Activated B cell treated with CpG ODN at 0.5 μM for 24 hours (primary cell): ENCODE measurements at regions of chr4 and their contacts with region 1.

Region 1: GRCh38 chr4:185395956-185396723 is 416 bp upstream of the LRP2BP start:
- DNase-seq: peak; percentile 98
- ATAC-seq: peak; percentile 89
- H3K4me3 Mint-ChIP-seq: peak overlapping the region; percentile 94
- H3K27ac Mint-ChIP-seq: peak overlapping the region; percentile 94
- H3K4me1 Mint-ChIP-seq: peaks cover 63% of the 10 kb centered on the region
- H3K27me3 Mint-ChIP-seq: no peaks in the 10 kb centered on the region
- CTCF ChIP-seq: no peak

Region 2: GRCh38 chr4:184733654-184734524 is 662.3 kb before region 1 on chr4 and contains the start of gene CENPU:
- CTCF ChIA-PET with region 1: no interaction called
- POLR2A ChIA-PET with region 1: no interaction called
- intact Hi-C with region 1: loop called (anchors 5 kb)
- DNase-seq: peak; percentile 95
- ATAC-seq: peak; percentile 96
- H3K4me3 Mint-ChIP-seq: peak within 1 kb of the TSS; percentile 88
- H3K27ac Mint-ChIP-seq: peak within 1 kb of the TSS; percentile 85
- H3K4me1 Mint-ChIP-seq: peaks cover 19% of the 10 kb centered on the region
- H3K27me3 Mint-ChIP-seq: no peaks in the 10 kb centered on the region
- CTCF ChIP-seq: no peak
- total RNA-seq, gene CENPU: 7.0 and 7.1 TPM in 2 replicates

Region 3: DNA sequence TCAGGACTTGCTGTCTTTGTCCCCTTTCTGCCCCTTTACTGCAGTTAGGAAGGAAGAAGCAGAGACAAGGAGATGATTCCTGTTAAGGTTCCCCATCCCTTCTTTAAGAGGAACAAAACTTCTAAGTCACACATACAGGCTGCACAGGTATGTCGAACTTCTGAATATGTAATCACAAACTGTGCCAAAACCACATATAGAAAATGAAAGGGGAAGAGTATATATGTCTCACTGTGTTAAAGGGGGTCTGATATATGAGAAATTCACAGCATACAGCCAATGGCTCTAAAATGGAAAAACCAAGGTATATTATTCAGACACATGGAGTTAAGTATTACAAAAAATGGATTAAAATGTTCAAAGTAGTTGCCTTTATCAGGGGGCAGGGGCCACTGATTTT is 204.1 kb before region 1 on chr4:
- CTCF ChIA-PET with region 1: no interaction called
- POLR2A ChIA-PET with region 1: no interaction called
- intact Hi-C with region 1: no loop called
- DNase-seq: no peak
- ATAC-seq: peak; percentile 61
- H3K4me3 Mint-ChIP-seq: peak overlapping the region; percentile 3
- H3K27ac Mint-ChIP-seq: peak overlapping the region; percentile 13
- H3K4me1 Mint-ChIP-seq: peaks cover 35% of the 10 kb centered on the region
- H3K27me3 Mint-ChIP-seq: no peaks in the 10 kb centered on the region
- CTCF ChIP-seq: no peak

Region 4: DNA sequence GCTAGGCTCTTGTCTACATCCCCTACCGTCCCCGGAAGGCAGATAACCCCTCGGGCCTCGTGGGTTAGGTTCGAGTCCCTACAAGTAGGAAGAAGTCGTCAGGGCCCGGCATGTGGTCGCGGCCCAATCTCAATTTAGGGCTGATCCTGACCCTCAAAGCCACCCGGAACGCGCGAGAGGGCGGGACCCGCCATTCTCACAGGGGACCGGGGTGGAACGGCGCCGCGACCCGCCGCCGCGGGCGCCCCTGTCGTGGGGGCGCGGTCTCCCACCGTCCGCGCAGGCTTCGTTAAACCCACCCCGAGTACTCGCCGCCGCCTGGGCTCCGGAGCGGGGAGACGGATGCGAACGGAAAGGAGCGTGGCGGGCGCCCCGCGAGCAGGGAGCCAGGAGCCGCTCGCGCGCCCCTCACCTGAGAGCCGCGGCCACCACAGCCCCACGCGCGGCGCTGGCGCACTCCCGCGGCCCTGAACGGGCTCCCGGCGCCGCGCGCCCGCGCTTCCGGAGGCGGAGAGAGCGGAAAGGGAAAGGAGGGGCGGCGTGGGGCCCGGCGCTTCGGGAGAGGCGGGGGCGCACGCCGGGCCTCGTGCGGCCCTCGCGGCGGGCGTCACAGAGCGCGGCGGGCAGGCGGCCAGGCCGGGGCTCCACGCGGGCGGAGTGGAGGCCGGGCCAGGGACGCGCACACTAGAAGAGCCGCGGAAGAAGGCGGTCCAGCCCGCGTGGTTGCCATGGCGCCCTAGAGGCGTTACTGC is 192.5 kb before region 1 on chr4 and contains the start of gene CFAP97:
- CTCF ChIA-PET with region 1: no interaction called
- POLR2A ChIA-PET with region 1: interaction called, 12 read pairs
- intact Hi-C with region 1: loop called (anchors 1 kb)
- DNase-seq: peak; percentile 82
- ATAC-seq: peak; percentile 81
- H3K4me3 Mint-ChIP-seq: peak within 1 kb of the TSS; percentile 93
- H3K27ac Mint-ChIP-seq: peak within 1 kb of the TSS; percentile 97
- H3K4me1 Mint-ChIP-seq: peaks cover 47% of the 10 kb centered on the region
- H3K27me3 Mint-ChIP-seq: no peaks in the 10 kb centered on the region
- CTCF ChIP-seq: no peak
- total RNA-seq, gene CFAP97: 42.6 and 44.1 TPM in 2 replicates

Region 5: DNA sequence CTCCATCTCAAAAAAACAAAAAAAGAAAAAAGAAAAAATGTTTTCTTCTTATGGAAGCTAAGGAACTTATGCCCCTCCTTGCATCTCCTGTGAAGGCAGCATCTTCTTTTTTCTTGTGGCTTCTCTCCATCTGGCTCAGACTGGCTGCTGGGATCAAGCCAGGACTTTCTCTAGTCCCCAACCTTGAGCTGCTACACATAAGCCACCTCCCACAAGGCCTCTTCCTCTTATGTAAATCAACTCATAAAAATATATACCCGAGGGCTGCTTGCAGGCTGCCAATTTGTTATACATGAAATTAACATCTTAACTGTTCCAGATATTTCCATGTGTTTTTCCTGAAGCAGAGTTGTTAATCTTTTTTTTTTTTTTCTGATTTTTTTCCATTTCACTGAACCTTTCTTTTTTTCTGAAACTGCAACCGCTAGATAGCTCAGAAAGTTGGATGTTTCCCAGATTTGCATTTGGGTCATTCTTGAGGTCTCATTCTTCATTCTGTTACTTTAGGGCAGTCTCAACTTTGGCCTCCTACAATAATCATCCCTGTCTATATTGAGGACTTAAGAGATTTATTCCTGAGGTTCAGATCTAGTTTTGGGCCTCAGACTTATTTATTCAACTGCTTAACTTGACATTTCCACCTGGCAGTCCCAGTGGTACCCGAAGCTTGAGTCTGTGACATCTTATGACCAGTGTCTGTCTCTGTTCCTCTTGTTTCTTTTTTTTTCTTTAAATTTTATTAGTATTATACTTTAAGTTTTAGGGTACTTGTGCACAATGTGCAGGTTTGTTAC is 176.4 kb before region 1 on chr4:
- CTCF ChIA-PET with region 1: no interaction called
- POLR2A ChIA-PET with region 1: interaction called, 12 read pairs
- intact Hi-C with region 1: no loop called
- DNase-seq: no peak
- ATAC-seq: peak; percentile 82
- H3K4me3 Mint-ChIP-seq: peak overlapping the region; percentile 74
- H3K27ac Mint-ChIP-seq: peak overlapping the region; percentile 87
- H3K4me1 Mint-ChIP-seq: peaks cover 79% of the 10 kb centered on the region
- H3K27me3 Mint-ChIP-seq: no peaks in the 10 kb centered on the region
- CTCF ChIP-seq: no peak

Region 6: DNA sequence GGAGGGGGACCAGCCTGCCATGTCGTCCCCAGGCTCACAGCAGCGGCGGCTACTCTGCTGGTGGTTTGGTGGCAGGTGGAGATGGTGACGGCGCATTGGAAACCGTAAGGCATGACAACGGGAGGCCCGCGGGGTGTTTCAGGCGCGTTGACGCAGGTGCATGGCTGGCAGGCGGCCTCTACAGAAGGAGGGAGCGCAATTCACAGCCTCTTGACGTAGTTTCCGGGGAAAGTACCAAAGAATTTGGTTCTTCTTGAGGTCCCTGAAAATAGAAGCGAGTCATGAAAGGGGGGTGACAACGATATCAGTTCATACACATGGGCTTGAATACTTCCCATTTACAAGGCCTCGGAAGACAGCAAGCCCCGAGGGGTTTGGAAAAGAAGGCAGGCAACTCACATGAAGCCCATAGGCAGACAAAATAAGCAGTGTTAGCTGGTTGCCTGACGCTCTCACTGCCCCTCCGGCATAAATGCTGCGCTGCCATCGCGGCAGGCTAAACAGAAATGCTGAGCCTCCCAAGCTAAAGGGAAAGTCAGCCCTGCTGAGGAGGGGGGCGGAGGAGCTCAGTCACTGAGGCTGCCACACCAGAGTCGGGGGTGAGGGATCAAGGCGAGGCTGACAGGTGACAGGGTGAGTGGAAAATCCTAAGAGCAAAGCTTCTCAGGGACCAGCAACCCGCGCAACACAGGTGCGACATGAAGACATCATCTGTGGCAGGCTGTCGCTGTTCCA is 191.5 kb after region 1 on chr4:
- CTCF ChIA-PET with region 1: no interaction called
- POLR2A ChIA-PET with region 1: interaction called, 10 read pairs
- intact Hi-C with region 1: loop called (anchors 1 kb)
- DNase-seq: peak; percentile 66
- ATAC-seq: peak; percentile 92
- H3K4me3 Mint-ChIP-seq: peak overlapping the region; percentile 82
- H3K27ac Mint-ChIP-seq: peak overlapping the region; percentile 95
- H3K4me1 Mint-ChIP-seq: peaks cover 20% of the 10 kb centered on the region
- H3K27me3 Mint-ChIP-seq: peaks cover 26% of the 10 kb centered on the region
- CTCF ChIP-seq: no peak